Cardiac septum (tissue), 1 donor: ENCODE measurements at regions of chr3 and their contacts with region 1.

Region 1: DNA sequence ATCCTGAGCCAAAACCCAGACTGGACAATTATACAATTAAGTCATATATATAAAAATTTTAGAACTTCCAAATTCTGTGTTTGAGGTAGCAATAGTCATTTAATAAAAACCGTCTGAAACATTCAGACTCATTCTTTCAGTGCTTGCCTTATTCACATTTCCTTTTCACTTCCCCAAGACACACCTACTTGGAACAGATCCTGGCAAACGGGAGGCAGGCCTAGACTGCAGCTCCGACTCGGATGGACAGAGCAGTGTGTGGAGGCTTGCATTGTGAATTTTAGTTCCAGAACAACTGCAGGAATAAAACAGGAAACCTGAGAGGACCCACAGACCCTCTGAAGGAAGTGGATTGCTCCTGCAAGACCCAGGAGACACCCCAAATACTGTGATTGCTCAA is 341.4 kb downstream of the CNTN3 start:
- DNase-seq: no peak

Region 2: GRCh38 chr3:73926360-73927202 is 346.5 kb before region 1 on chr3:
- intact Hi-C with region 1: no loop called
- DNase-seq: no peak

Region 3: GRCh38 chr3:74314696-74315095 is 41.6 kb after region 1 on chr3:
- intact Hi-C with region 1: no loop called
- DNase-seq: no peak

Region 4: DNA sequence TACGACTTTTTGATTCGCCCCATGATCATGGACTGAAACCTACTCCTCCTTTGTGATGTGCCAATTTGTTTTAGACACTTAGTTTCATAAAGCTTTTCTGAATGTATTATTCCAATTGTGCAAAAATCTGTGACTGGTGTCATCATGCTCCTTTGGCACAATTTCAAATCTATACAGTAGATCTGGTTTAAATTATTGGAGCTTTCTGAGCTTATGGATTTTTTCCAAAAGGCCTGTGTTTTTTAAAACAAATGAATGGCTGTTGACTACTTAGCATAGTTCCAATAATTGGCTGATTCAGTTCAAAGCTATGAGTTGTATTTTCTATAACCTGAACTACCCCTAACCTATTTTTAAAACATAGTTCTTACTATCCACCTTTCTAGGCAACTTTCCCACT is 58.6 kb after region 1 on chr3:
- intact Hi-C with region 1: no loop called
- DNase-seq: no peak

Region 5: GRCh38 chr3:74992898-74993297 is 719.8 kb after region 1 on chr3:
- intact Hi-C with region 1: loop called (anchors 10 kb)
- DNase-seq: no peak